Activated T-helper 1 cell treated with anti-CD3 and anti-CD28 coated beads, Interleukin-12 subunit alpha, Interleukin-12 subunit beta, Interleukin-2, Interleukin-4 antibody, amounts not matched to agents 30 ng/mL and 10 ng/mL and 1 ng/mL, durations not matched to agents 14 hours and 24 hours and 36 hours (primary cell): ENCODE measurements at regions of chrX and their contacts with region 1.

Region 1: DNA sequence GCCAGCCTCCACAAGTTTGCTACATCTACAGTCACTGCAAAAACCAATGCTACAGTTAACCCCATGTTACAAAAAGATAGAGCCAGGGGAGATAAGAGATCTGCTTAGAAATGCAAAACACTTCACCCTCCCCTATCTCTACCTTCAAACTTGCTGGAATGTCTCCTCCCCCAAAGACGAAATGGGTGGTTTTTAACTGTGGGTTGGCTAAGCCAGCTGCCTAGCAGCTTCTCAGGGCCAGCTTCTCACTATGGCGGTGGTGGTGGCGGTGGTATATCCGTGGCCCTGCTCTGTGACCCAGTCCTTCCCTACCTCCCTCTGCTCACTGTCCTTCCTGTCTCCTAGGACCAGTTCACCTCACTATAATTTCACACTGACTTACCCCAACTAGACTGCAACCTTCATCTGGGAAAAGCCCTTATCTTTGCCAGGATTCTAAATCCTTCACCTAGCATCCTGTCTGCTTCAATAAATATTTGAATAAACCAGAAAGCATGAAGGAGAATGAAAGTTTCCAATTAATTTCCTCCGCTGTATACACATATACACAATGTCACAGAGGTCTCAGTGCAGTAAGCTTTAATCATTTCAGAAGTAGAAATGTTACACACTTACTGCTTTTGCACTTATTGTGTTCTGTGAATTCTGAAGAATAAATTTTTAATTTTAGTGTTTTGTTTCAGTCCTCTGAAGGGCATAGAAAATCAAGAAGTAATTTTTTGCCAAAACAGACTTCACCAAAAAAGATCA is 46.3 kb downstream of the SH3KBP1 start:
- DNase-seq: peak; percentile 37
- H3K4me3 Mint-ChIP-seq: peak overlapping the region; percentile 41
- H3K27ac Mint-ChIP-seq: peak overlapping the region; percentile 85
- H3K4me1 Mint-ChIP-seq: peaks cover 41% of the 10 kb centered on the region
- H3K27me3 Mint-ChIP-seq: no peaks in the 10 kb centered on the region

Region 2: DNA sequence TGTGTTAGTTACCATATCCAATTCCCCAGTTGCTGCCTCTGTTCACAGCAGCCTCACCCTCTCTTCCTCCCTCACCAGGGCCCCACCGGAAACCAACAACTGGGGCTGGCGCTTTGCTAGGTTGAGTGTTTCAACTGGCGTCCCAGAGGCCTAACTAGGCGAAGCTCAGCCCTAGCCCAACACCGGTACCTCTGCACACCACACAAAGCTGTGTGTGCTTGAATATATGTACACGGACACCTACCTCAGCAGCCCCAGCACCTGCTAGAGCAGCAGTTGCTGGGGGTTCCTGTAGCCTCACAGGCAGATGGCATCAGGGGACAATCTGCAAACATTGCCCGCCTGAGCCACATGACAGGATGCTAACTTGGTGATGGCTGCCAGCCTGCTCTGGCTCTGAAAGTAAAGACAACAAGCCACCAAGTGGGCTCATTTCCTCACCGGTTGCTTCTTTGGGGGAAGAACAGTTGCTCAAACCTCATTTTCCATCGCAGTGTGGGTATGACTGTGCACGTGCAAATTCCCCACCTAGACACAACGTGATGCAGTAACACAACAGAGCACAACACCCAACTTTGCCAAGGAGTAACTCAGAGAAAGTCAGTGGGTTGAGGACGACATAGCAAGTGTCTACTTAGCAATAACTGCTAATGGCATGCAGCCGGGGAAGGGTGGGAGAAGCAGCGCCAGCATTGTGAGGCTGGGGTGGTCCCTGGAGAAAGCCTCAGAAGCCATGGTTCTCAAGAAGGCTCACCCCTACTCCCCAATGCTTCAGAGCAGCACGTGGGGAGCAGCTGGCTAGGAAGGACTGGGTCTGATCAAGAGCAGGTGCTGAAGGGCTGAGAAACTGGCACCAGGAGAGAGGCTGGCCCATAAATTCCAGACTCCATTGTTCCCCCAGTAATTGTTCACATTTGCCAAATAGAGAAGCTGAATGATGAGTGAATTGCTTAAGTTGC is 93.1 kb before region 1 on chrX:
- intact Hi-C with region 1: loop called (anchors 1 kb)
- DNase-seq: peak; percentile 72
- H3K4me3 Mint-ChIP-seq: peak overlapping the region; percentile 67
- H3K27ac Mint-ChIP-seq: peak overlapping the region; percentile 93
- H3K4me1 Mint-ChIP-seq: peaks cover 91% of the 10 kb centered on the region
- H3K27me3 Mint-ChIP-seq: no peaks in the 10 kb centered on the region

Region 3: GRCh38 chrX:19904778-19905367 is 63.8 kb after region 1 on chrX:
- intact Hi-C with region 1: no loop called
- DNase-seq: no peak
- H3K4me3 Mint-ChIP-seq: no peak overlapping the region
- H3K27ac Mint-ChIP-seq: no peak overlapping the region
- H3K4me1 Mint-ChIP-seq: peaks cover 19% of the 10 kb centered on the region
- H3K27me3 Mint-ChIP-seq: no peaks in the 10 kb centered on the region

Region 4: GRCh38 chrX:20796450-20796849 is 955.4 kb after region 1 on chrX:
- intact Hi-C with region 1: no loop called
- DNase-seq: no peak
- H3K4me3 Mint-ChIP-seq: no peak overlapping the region
- H3K27ac Mint-ChIP-seq: no peak overlapping the region
- H3K4me1 Mint-ChIP-seq: no peaks in the 10 kb centered on the region
- H3K27me3 Mint-ChIP-seq: peaks cover 2% of the 10 kb centered on the region